Adrenal gland (tissue), 19 donors: ENCODE measurements at regions of chr10 and their contacts with region 1.

Region 1: GRCh38 chr10:113563306-113564088 is 10.6 kb downstream of the HABP2 start:
- DNase-seq: peak; percentile 68 to 87 (median 81)
- H3K4me3 ChIP-seq: peak overlapping the region in 1 of 4 donors; percentile 52
- H3K27ac ChIP-seq: no peak overlapping the region
- H3K4me1 ChIP-seq: no peaks in the 10 kb centered on the region
- H3K27me3 ChIP-seq: no peaks in the 10 kb centered on the region
- CTCF ChIP-seq: peak; percentile 91 to 98 (median 94)
- POLR2A ChIP-seq: no peak

Region 2: GRCh38 chr10:113454341-113455061 is 109.0 kb before region 1 on chr10:
- intact Hi-C with region 1: loop called in 1 of 2 experiments (anchors 10 kb)
- DNase-seq: peak; percentile 21 to 62 (median 34)
- H3K4me3 ChIP-seq: no peak overlapping the region
- H3K27ac ChIP-seq: no peak overlapping the region
- H3K4me1 ChIP-seq: no peaks in the 10 kb centered on the region
- H3K27me3 ChIP-seq: no peaks in the 10 kb centered on the region
- CTCF ChIP-seq: peak; percentile 39 to 71 (median 54)
- POLR2A ChIP-seq: no peak

Region 3: DNA sequence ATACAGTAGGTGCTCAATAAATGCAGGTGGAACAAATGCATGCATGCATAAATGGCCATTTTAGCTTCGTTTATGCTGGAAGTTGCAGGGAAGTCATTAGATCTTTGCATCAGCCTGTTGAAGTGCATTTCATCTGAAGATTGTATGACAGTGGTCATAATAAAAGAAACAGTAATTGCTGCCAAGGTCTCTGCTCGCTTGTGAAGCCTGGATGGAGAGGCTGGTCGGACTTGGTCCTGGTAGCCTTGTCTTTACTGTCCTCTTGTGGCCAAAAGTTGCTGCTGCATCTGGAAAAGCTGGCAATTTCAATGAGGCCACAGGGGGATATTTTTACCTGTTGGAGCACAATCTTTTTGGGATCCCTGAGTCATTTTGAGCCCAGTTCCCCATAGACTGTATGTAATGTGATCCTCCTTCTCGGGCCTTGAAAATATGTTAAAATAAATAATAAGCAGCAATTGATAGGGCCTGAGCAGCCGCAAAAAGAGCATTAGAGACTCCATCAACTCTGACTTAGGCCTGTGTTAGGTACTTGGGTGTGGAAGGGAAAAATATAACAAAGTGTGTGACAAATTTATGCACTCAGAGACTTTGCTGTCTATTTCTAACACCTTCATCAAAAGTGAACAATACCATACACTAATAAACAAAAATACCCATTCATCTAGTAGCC is 42.2 kb before region 1 on chr10:
- intact Hi-C with region 1: loop called in 1 of 2 experiments (anchors 5 kb)
- DNase-seq: peak; percentile 71 to 89 (median 81)
- H3K4me3 ChIP-seq: no peak overlapping the region
- H3K27ac ChIP-seq: no peak overlapping the region
- H3K4me1 ChIP-seq: no peaks in the 10 kb centered on the region
- H3K27me3 ChIP-seq: no peaks in the 10 kb centered on the region
- CTCF ChIP-seq: peak; percentile 97 to 99 (median 98)
- POLR2A ChIP-seq: no peak